ENCODE measurements at regions of chr11 and their contacts with region 1.

Region 1: DNA sequence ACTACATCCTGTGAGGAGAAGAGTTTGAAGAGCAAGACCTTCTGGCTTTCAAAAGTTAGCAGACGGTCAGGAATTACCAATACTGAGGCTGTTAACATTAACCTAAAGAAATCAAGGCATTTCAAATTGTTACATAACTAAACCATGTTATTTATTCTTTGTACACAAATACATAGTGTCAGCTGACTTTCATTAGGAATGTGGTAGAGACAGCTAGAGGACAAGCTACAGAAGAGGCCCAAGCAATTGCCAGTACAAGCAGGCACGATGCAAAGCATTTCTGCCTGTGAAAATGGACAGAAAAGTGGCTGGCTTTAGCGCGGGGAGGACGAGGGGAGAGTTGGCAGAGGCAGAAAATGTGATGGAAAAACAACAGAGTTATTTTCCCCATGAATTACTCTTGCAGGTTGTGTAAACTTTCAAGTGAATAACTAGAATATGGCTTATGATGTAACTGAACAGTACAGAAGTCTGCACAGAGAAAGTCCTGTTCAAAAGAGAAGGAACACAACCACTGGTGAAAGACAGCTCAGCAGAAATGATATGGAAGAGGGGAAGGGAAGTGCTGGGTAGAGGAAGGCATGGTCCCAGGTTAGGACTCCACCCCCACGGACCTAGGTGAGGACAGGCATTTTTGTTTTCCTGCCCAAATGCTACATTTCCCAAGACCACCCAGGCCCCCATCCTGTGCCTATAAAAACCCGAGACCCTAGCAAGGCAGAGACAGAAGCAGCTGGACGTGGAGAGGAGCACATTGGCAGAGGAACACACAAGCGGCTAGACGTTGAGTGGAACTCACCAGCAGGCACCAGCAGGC is 77.9 kb downstream of the MAML2 start:
- DNase-seq: no peak
- ATAC-seq: no peak
- H3K4me3 ChIP-seq: no peak overlapping the region
- H3K27ac ChIP-seq: no peak overlapping the region
- H3K4me1 ChIP-seq: peaks cover 2% of the 10 kb centered on the region; the same call in 1 of the 2 replicates
- H3K27me3 ChIP-seq: no peaks in the 10 kb centered on the region
- CTCF ChIP-seq: no peak

Region 2: DNA sequence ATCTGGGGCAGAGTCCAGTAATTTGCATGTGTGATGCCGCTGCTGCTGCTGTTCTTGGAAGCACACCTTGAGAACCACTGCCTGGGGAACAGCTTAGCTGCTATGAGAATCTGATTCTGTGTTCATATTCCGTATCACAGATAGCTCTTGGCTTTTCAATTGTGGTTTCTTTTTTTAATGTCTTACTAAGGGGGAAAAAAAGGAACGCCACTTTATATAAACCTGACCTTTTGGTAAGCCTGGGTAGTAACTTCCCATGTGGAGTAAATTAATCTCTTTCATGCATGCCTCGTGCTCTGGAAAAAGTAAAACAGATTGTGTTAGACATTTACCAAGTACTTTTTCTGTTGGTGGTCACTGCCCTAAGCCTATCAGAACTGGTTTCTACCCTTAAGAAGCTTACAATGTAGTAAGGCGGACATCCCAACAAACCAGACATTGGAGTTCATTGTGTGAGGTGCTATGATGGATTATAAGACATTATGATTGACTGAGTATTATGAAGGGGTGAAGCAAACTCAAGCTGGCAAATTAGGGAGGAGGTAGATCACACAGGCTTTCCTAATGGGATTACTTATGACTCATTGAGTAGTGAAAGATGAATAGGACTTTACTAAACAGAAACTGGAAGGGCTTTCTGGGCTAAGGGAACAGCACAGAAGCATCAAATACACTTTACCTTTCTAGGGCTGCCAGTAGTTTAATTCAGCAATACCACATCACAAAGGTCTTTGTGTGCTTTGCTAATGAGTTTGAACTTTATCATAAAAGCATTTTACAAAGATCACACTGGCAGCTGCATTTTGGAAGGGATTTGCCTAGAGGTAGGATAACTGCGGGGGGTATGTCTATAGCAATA is 13.1 kb after region 1 on chr11:
- CTCF ChIA-PET with region 1: no interaction called
- POLR2A ChIA-PET with region 1: interaction called, 17 read pairs
- in situ Hi-C with region 1: no loop called
- intact Hi-C with region 1: no loop called
- DNase-seq: no peak
- ATAC-seq: peak; percentile 26; the same call in 1 of the 2 replicates
- H3K4me3 ChIP-seq: no peak overlapping the region
- H3K27ac ChIP-seq: no peak overlapping the region
- H3K4me1 ChIP-seq: peaks cover 7% of the 10 kb centered on the region; the same call in 1 of the 2 replicates
- H3K27me3 ChIP-seq: no peaks in the 10 kb centered on the region
- CTCF ChIP-seq: no peak

Region 3: DNA sequence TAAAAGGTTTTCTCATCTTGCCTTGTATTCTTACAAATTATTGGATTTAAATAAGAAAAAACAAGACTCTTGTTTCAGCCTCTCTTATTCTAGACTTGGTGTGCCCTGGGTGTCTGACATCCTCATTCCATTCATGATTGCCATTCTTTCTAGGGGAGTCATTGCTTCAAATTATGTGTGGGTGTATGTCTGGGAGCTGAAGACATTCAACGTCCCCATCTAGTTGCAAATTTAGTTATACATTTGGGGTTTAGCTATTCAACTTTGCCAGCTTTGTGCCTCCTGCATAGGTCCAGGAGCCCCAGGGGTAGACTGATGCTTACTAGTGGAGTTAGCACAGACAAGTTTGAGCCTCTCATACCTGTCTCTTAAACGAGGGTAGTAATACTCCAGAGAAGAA is 59.8 kb after region 1 on chr11:
- CTCF ChIA-PET with region 1: no interaction called
- POLR2A ChIA-PET with region 1: no interaction called
- in situ Hi-C with region 1: no loop called
- intact Hi-C with region 1: no loop called
- DNase-seq: no peak
- ATAC-seq: peak; percentile 61; the same call in 1 of the 2 replicates
- H3K4me3 ChIP-seq: no peak overlapping the region
- H3K27ac ChIP-seq: peak overlapping the region; percentile 27
- H3K4me1 ChIP-seq: peaks cover 22% of the 10 kb centered on the region
- H3K27me3 ChIP-seq: no peaks in the 10 kb centered on the region
- CTCF ChIP-seq: no peak

Region 4: GRCh38 chr11:96357794-96358193 is 92.7 kb after region 1 on chr11:
- CTCF ChIA-PET with region 1: no interaction called
- POLR2A ChIA-PET with region 1: interaction called, 19 read pairs
- in situ Hi-C with region 1: no loop called
- intact Hi-C with region 1: no loop called
- DNase-seq: no peak
- ATAC-seq: no peak
- H3K4me3 ChIP-seq: no peak overlapping the region
- H3K27ac ChIP-seq: no peak overlapping the region
- H3K4me1 ChIP-seq: no peaks in the 10 kb centered on the region
- H3K27me3 ChIP-seq: no peaks in the 10 kb centered on the region
- CTCF ChIP-seq: no peak

Measured in Panc1 (cell line).